Ascending aorta (tissue), 2 donors: ENCODE measurements at regions of chr19 and their contacts with region 1.

Region 1: GRCh38 chr19:35269421-35270117 is 807 bp downstream of the USF2 start:
- DNase-seq: peak in 1 of 2 donors; percentile 87
- H3K4me3 ChIP-seq: peak overlapping the region; percentile 86 to 98
- H3K27ac ChIP-seq: peak overlapping the region; percentile 79 to 97
- H3K4me1 ChIP-seq: peaks cover 7 to 12% of the 10 kb centered on the region in 2 donors
- H3K27me3 ChIP-seq: no peaks in the 10 kb centered on the region
- CTCF ChIP-seq: peak; percentile 38 to 59 (median 53)

Region 2: GRCh38 chr19:35066691-35067563 is 202.6 kb before region 1 on chr19:
- intact Hi-C with region 1: loop called (anchors 5 kb)
- DNase-seq: peak; percentile 39 to 88
- H3K4me3 ChIP-seq: no peak overlapping the region
- H3K27ac ChIP-seq: no peak overlapping the region
- H3K4me1 ChIP-seq: no peaks in the 10 kb centered on the region
- H3K27me3 ChIP-seq: no peaks in the 10 kb centered on the region
- CTCF ChIP-seq: peak; percentile 75 to 84 (median 80)

Region 3: DNA sequence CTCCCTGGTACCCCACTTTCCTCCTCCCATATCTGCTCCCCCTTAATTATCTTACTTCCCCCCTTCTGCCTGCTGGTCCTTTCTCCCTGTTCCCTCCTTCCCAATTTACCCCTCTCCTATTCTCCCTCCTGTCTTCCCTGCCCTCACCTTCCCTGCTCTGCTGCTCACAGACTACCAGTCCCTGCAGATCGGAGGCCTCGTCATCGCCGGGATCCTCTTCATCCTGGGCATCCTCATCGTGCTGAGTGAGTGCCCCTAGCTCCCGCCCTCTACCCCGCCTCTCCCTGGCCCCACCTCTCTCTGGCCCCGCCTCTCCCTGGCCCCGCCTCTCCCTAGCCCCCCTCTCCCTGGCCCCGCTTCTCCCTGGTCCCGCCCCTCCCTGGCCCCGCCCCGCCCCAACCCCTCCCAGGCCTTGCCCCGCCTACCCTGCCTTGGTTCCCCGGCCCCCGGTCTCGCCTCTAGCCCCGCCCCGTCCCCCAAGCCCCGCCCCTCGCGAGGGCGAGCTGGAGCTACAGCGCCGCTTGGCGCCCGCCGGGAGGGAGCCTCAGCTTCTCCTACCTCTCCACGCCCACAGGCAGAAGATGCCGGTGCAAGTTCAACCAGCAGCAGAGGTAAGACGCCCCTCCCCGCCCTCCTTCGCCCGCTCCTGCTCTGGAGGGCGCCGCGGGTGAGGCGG is 128.5 kb before region 1 on chr19:
- intact Hi-C with region 1: loop called (anchors 2 kb)
- DNase-seq: peak; percentile 77 to 96
- H3K4me3 ChIP-seq: peak overlapping the region; percentile 52 to 66
- H3K27ac ChIP-seq: peak overlapping the region; percentile 94 to 96
- H3K4me1 ChIP-seq: peaks cover 12 to 31% of the 10 kb centered on the region in 2 donors
- H3K27me3 ChIP-seq: no peaks in the 10 kb centered on the region
- CTCF ChIP-seq: peak; percentile 27 to 75 (median 45)

Region 4: DNA sequence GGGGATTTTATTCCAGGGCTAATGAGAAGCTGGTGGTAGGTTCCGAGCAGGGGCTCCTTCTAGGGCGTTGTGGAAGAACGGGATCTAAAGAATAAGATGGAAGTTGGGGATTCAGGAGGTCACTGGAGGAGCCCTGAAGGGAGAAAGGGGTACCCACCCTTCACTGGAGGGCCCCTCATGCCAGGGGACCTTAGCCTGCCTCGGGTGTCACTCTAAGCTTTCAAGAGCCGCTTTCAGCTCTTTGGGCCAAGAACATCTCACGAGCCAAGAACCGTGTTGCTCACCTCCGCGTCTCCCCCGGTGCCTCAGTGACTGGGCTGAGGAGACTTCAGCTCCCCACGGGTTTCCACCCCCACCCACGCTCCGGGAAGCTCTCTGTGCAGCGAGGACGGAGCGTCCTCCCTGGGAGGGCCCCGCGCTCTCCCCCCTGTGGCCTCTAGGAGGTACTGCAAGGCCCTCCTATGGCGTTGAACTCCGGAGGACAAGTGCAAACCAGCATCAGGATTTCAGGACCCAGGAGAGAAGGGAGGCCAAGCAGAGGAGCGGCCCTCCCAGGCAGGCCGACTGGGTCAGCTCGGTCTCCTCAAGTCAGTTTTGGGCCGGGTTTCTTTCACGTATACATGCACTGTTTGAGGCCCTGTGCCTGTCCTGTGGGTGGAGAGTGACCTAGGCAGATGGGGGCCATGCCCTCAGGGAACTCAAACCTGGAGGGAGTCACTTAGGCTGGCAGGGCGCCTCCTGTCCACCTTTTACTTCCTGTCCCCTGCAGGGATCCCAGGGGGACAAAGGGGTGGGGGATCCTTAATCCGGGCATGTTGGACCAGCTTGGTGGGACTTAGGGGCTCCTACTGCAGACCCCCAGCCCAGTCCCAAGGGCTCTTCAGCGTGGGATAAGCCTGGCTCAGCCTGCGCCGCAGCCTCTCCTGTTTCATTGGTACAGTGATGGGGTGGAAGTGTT is 225.8 kb after region 1 on chr19:
- intact Hi-C with region 1: loop called (anchors 5 kb)
- DNase-seq: peak in 1 of 2 donors; percentile 74
- H3K4me3 ChIP-seq: no peak overlapping the region
- H3K27ac ChIP-seq: no peak overlapping the region
- H3K4me1 ChIP-seq: no peaks in the 10 kb centered on the region
- H3K27me3 ChIP-seq: no peaks in the 10 kb centered on the region
- CTCF ChIP-seq: peak; percentile 82 to 98 (median 97)

Region 5: DNA sequence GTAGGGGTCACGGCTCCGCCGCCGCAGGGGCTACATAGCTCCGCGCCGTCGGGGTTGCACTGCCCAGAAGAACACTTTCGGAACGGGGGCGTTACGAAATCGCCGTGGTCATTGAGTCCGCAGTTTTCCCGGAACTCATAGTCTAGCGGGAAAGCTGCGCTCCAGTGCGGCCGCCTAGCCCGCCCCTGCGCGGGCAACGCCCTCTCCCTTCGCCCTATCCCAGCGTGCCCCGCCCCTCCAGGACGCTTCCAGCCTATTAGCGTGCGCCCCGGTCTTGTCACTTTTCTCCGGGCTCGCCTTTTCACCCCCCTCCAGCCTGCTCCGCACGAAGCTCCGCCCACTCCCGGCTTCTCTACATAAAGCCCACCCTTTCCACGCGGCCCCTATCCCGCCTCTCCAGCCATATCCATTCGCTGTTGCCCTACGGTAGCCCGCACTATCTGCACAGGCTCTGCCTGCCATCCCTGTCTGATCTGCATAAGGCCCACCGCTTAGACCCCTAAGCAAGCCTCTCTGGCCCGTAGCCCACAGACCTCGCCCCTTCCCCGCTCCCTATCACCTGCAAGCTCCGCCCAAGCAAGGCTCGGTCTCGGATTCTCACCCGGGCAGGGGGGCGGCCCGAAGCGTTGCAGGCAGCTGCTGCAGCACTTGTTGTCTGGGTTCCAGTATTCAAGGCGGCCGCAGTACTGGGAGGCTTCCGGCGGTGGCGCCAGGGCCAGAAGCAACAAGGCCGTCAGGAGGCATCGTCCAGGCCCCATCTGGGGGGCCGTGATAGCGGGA is 471.0 kb after region 1 on chr19:
- intact Hi-C with region 1: loop called (anchors 10 kb)
- DNase-seq: peak; percentile 94 to 99
- H3K4me3 ChIP-seq: peak overlapping the region; percentile 56 to 70
- H3K27ac ChIP-seq: peak overlapping the region; percentile 81 to 85
- H3K4me1 ChIP-seq: peaks cover 10 to 18% of the 10 kb centered on the region in 2 donors
- H3K27me3 ChIP-seq: no peaks in the 10 kb centered on the region
- CTCF ChIP-seq: peak; percentile 12 to 22 (median 18)